ENCODE measurements at regions of chr9 and their contacts with region 1.

Region 1: GRCh38 chr9:130461218-130461630 is 16.5 kb downstream of the ASS1 start:
- DNase-seq: peak in 1 of 2 donors; percentile 73
- ATAC-seq: peak; percentile 58

Region 2: DNA sequence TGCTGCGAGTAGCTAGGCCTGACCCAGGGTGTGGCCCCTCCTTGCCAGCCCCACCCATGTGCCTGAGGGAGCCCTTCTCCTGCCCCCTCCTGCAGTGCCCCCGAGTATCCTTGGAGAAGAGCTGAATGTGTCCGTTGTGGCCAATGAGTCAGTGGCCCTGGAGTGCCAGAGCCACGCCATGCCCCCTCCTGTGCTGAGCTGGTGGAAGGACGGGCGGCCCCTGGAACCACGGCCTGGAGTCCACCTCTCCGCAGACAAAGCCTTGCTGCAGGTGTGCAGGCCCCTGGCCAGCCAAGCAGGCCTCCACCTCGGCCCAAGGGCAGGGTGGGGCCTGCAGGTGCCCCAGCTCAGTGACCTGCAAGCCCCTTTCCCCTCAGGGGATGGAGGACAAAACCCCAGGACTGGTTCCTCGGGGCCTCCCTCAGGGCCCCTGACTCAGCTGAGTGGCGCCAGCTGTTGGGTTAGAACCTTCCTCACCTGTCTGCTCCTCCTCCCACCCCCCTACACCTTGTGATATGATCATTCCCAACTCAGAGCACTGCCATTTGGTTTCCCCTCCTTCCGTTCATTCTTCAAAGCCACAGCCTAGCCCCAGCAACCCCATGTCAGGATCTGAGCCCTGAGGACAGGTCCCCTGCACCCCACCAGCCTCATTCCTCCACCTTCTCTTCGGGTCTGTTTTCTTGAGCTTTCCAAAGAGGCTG is 96.5 kb before region 1 on chr9:
- intact Hi-C with region 1: no loop called
- DNase-seq: no peak
- ATAC-seq: no peak

Region 3: DNA sequence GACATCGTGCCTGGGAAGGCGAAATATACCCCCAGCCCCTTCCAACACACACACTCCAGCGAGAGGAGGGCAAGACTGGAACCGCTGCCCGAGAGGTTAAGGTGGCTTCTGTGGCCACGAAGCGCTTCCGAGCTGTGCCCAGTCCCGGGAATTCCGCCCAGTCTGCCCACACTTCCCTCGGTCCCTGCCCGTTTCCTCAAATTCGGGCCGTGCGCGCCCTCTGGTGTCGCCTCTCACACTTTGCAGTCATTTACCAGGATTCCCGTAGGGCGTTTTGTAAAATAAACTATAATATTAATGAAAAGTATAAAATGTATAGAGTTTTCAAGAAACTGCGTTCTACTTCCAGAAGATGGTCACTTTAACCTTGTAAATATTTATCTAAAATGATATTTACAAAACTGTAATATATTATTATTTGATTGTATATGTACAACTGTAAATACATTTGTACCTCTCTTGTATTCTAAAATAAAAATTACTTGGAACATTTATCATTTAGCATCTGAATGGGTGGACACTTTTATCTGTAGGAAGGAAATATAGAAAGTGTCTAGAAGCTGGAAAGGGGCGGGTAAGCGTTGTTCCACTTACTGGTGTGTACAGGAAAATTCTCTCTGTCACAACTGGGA is 221.4 kb after region 1 on chr9:
- intact Hi-C with region 1: loop called (anchors 5 kb)
- DNase-seq: peak; percentile 75 to 83
- ATAC-seq: peak; percentile 77

Region 4: DNA sequence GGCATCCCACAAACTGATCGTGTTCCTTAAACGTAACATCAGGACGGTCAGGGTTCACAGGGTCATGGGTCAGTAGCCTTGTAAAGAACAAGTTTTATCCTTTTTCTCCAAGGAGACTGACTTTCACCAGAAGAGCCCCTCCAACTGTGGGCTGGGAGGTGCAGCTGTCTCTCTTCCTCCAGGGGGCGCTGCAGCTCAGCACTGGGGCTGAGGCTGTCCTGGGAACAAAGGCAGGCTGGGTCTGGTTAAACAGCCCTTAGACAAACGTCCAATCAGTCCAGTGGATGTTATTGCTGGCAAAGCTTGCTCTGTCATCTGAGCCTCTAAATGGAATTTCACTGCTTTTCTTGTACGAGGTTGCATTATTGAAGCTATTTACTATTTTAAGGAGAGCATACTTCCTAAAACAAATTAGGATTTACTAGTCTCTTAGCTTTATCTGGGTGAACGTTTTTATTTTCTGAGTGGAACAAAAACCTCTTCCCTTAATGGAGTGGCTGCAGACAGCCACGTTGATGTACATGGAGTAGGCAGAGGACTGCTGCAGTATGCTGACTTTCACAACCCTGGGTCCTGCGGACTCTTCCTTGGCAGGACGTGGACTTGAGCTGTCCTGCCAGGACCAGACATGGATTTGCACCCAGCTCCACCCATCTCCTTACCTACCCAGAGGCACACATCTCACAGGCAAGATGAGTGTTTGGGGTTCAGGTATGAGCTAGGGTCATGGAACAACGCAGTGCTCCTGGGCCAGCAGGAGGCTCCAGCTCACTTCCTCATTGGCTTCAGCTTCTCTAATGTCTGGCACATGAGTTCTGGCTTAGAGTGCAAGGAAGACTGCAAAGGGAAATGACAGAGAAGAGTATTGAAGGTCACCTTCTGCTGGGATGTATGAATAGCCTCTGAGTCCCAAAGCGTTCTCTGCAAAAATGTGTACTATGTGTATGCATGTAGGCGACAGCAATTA is 240.1 kb after region 1 on chr9:
- intact Hi-C with region 1: no loop called
- DNase-seq: peak; percentile 57 to 87
- ATAC-seq: peak; percentile 94